ENCODE measurements at regions of chrX and their contacts with region 1.

Region 1: DNA sequence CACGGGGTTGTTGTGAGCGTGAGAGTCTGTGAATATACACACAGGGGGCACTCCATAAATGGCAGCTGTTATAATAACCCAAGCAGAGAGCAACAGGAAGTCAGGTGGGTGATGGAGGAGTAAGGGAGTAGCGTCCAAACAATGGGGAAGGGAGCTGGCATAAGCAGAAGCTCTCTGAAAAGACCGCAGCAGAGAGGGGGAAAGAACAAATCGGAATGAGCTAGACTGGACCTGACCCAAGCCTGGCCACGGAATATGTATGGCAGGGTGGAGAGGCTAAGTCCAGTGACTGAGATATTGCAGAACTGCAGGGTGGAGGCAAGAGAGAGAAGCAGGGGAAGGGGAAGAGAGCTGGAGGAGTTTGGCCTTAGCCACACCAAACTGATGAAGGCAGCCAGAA is 6.5 kb upstream of the GJB1 start:
- DNase-seq: no peak
- ATAC-seq: no peak
- H3K4me3 ChIP-seq: no peak overlapping the region
- H3K27ac ChIP-seq: no peak overlapping the region
- H3K4me1 ChIP-seq: no peaks in the 10 kb centered on the region
- H3K27me3 ChIP-seq: peaks cover 0 to 7% (median 0%) of the 10 kb centered on the region in 9 donors
- CTCF ChIP-seq: no peak
- POLR2A ChIP-seq: no peak

Region 2: DNA sequence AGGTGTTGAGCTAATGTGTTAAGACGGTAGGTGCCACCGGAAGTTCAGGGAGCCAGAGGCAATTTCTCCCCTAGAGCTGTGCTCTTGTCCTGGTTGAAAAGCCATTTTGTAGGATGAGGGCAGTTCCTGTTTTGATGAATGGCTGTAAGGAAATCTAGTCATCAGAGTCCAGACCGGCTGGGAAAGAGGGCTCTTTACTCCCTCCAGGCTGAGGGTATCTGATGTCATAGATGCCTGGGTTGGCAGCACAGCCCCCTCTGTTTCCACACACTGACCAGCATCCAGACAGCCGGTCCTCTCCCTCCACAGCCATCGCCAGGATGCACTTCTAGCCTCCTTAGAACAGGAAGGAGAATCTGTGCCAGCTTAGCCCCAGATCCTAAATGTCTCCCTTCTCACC is 64.6 kb before region 1 on chrX:
- intact Hi-C with region 1: loop called in 1 of 10 experiments (anchors 10 kb)
- DNase-seq: no peak
- ATAC-seq: no peak
- H3K4me3 ChIP-seq: no peak overlapping the region
- H3K27ac ChIP-seq: no peak overlapping the region
- H3K4me1 ChIP-seq: no peaks in the 10 kb centered on the region
- H3K27me3 ChIP-seq: peaks cover 0 to 6% (median 0%) of the 10 kb centered on the region in 9 donors
- CTCF ChIP-seq: no peak
- POLR2A ChIP-seq: no peak

Region 3: GRCh38 chrX:71599965-71600364 is 383.5 kb after region 1 on chrX:
- intact Hi-C with region 1: no loop called
- DNase-seq: no peak
- ATAC-seq: peak in 3 of 4 donors; percentile 67 to 79 (median 67)
- H3K4me3 ChIP-seq: no peak overlapping the region
- H3K27ac ChIP-seq: no peak overlapping the region
- H3K4me1 ChIP-seq: no peaks in the 10 kb centered on the region
- H3K27me3 ChIP-seq: no peaks in the 10 kb centered on the region
- CTCF ChIP-seq: no peak
- POLR2A ChIP-seq: no peak